ENCODE measurements at regions of chrX and their contacts with region 1.

Region 1: GRCh38 chrX:109536439-109537336 is at the start of gene NXT2:
- DNase-seq: peak; percentile 89
- H3K4me3 Mint-ChIP-seq: peak within 1 kb of the TSS; percentile 95
- H3K27ac Mint-ChIP-seq: peak within 1 kb of the TSS; percentile 98
- H3K4me1 Mint-ChIP-seq: peaks cover 19% of the 10 kb centered on the region
- H3K27me3 Mint-ChIP-seq: no peaks in the 10 kb centered on the region
- total RNA-seq, gene NXT2: 14.8 to 14.9 TPM

Region 2: GRCh38 chrX:107894038-107894437 is 1642.7 kb before region 1 on chrX:
- CTCF ChIA-PET with region 1: no interaction called
- intact Hi-C with region 1: no loop called
- DNase-seq: peak; percentile 22
- H3K4me3 Mint-ChIP-seq: no peak overlapping the region
- H3K27ac Mint-ChIP-seq: no peak overlapping the region
- H3K4me1 Mint-ChIP-seq: no peaks in the 10 kb centered on the region
- H3K27me3 Mint-ChIP-seq: no peaks in the 10 kb centered on the region

Region 3: DNA sequence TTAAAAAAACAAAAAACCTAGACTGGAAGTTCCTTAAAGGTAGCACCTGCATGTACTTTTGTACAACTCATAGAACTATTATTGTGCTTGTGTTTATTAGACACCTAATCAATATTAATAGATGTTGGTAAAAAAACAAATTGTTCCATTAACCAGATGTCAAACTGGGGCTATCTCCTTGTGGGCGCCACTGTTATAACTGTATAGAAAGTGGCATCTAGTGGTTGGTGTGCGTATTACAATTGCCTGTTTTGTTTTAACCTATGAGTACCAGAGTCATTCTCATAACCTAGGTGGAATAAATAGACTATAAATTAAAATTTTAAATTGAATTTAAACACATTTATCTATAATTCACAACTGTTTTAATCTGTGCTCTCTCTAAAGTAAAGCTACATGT is 999.7 kb before region 1 on chrX:
- CTCF ChIA-PET with region 1: no interaction called
- intact Hi-C with region 1: no loop called
- DNase-seq: peak; percentile 12
- H3K4me3 Mint-ChIP-seq: no peak overlapping the region
- H3K27ac Mint-ChIP-seq: no peak overlapping the region
- H3K4me1 Mint-ChIP-seq: no peaks in the 10 kb centered on the region
- H3K27me3 Mint-ChIP-seq: no peaks in the 10 kb centered on the region

Region 4: DNA sequence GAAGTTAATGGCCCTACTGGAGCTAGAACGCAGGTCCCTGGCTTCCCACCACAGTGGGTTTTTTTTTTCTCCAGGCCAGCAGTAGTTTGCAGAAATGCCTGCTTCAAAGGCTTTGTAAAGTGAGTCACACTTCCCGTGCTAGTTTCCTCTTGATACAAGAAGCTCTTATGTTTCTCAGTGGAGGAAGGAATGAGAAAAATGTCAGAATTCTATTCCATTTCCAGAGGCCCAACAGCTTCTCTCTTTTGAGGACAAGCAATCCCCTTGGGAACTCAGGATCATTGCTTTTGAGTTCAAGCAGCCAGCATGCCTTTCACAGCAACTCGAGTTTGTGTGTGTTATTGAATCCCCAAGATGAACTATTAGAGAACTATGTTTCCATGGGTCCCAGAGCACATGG is 189.1 kb before region 1 on chrX:
- CTCF ChIA-PET with region 1: no interaction called
- intact Hi-C with region 1: no loop called
- DNase-seq: peak; percentile 11
- H3K4me3 Mint-ChIP-seq: no peak overlapping the region
- H3K27ac Mint-ChIP-seq: no peak overlapping the region
- H3K4me1 Mint-ChIP-seq: peaks cover 2% of the 10 kb centered on the region
- H3K27me3 Mint-ChIP-seq: no peaks in the 10 kb centered on the region

Region 5: DNA sequence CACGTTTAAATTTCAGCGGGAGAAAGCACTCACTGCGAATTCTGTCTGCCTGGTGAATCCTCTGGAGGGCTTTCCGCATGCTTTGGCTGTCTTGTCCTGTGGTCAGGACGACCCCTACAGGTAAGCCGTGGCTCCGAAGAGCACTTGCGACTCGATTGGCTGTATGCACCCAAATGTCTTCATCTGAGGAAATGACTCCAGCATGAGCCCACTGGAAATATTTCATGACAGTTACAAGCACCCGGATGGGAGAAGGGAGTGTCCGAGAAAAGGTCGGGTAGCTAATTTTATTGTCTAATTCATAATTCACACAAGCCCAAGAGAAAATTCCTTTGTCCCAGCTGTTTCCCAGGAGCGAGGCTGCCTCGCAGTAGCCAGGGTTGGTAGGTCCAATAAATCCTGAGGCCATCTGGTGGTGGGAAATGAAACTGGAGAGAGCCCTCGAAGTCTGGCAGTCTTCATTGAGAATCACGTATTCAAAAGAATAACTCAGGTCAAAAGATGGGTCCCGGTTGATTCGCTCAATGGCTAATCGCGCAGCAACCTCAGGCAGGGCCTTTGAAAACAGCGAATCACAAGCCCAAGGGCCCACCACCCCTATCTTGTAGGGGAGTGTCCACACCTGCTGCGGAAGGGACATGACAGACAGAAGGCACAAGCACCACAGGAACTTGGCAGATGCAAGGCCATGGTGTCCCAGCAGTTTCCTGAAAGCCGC is 61.4 kb before region 1 on chrX:
- CTCF ChIA-PET with region 1: no interaction called
- intact Hi-C with region 1: loop called (anchors 2 kb)
- DNase-seq: peak; percentile 34
- H3K4me3 Mint-ChIP-seq: no peak overlapping the region
- H3K27ac Mint-ChIP-seq: no peak overlapping the region
- H3K4me1 Mint-ChIP-seq: peaks cover 7% of the 10 kb centered on the region
- H3K27me3 Mint-ChIP-seq: no peaks in the 10 kb centered on the region

Region 6: DNA sequence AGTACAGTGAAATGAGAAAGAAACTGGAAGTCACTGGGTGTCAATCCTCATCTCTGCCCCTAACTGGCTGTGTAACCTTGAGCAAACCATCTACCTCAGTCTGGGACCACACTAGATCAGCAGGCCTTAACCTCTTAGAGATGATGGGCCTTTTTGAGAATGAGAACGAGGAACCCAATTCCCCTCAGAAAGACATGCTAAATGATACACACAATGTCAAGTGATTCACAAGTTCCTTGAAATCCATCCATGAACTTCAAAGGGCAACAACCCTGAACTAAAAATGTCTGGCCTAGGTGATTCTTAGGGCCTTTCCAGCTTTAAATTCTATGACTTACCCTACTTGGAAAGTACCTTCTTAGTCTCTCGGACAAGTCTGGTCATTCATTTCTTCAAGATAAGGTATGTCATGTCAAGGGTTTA is 149.0 kb after region 1 on chrX:
- CTCF ChIA-PET with region 1: no interaction called
- intact Hi-C with region 1: loop called (anchors 1 kb)
- DNase-seq: peak; percentile 55
- H3K4me3 Mint-ChIP-seq: no peak overlapping the region
- H3K27ac Mint-ChIP-seq: peak overlapping the region; percentile 89
- H3K4me1 Mint-ChIP-seq: peaks cover 33% of the 10 kb centered on the region
- H3K27me3 Mint-ChIP-seq: no peaks in the 10 kb centered on the region

Region 7: GRCh38 chrX:109714340-109714958 is 177.8 kb after region 1 on chrX:
- CTCF ChIA-PET with region 1: no interaction called
- intact Hi-C with region 1: loop called (anchors 5 kb)
- DNase-seq: no peak
- H3K4me3 Mint-ChIP-seq: no peak overlapping the region
- H3K27ac Mint-ChIP-seq: no peak overlapping the region
- H3K4me1 Mint-ChIP-seq: peaks cover 46% of the 10 kb centered on the region
- H3K27me3 Mint-ChIP-seq: no peaks in the 10 kb centered on the region

Region 8: GRCh38 chrX:109927663-109928273 is 391.1 kb after region 1 on chrX:
- CTCF ChIA-PET with region 1: no interaction called
- intact Hi-C with region 1: no loop called
- DNase-seq: no peak
- H3K4me3 Mint-ChIP-seq: no peak overlapping the region
- H3K27ac Mint-ChIP-seq: no peak overlapping the region
- H3K4me1 Mint-ChIP-seq: no peaks in the 10 kb centered on the region
- H3K27me3 Mint-ChIP-seq: no peaks in the 10 kb centered on the region

Region 9: DNA sequence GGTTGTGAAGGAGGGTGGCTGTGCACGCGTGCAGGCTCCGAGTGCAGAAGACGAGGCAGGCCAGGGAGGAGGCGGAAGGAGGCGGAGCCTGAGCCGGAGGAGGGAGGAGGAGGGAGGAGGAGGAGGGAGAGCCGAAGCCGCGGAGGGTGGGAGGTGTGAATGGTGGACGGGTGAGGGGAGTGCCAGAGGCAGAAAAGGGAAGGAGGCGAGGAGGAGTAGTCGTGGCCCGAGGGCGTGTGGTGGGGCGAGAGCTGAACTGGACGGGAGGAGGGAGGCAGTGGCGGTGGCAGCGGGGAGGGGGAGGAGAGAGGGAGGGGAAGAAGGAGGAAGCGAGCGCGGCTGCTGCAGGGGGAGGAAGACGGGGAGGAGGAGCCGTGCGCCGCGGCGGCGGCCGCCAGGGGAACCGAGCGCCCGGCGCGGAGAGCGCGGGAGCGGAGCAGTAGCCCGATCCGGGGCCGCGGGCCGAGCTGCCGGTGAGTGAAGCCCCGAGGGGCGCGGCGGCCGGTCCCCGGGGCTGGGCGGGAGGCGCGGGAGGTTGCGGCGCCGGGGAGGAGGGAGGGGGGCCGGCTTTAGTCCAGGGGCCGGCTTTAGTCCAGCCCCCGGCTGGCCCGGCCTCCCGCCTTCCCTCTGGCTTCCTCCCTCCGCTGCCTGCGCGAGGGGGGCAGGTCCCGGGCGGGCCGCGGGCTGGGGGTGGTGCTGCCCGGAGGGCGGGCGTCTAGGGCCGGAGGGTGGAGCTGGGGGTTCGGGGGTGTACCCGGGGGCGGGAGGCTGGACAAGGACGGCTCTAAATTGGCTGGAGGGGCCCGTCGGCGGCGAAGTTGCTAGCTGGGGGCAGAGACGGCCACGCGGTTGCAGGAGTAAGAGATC is 465.8 kb after region 1 on chrX and contains the start of gene TMEM164:
- CTCF ChIA-PET with region 1: no interaction called
- intact Hi-C with region 1: loop called (anchors 2 kb)
- DNase-seq: peak; percentile 83
- H3K4me3 Mint-ChIP-seq: peak within 1 kb of the TSS; percentile 83
- H3K27ac Mint-ChIP-seq: peak within 1 kb of the TSS; percentile 81
- H3K4me1 Mint-ChIP-seq: peaks cover 31% of the 10 kb centered on the region
- H3K27me3 Mint-ChIP-seq: no peaks in the 10 kb centered on the region
- total RNA-seq, gene TMEM164: 11.9 to 12.0 TPM